A549 (cell line): ENCODE measurements at regions of chr7 and their contacts with region 1.

Region 1: DNA sequence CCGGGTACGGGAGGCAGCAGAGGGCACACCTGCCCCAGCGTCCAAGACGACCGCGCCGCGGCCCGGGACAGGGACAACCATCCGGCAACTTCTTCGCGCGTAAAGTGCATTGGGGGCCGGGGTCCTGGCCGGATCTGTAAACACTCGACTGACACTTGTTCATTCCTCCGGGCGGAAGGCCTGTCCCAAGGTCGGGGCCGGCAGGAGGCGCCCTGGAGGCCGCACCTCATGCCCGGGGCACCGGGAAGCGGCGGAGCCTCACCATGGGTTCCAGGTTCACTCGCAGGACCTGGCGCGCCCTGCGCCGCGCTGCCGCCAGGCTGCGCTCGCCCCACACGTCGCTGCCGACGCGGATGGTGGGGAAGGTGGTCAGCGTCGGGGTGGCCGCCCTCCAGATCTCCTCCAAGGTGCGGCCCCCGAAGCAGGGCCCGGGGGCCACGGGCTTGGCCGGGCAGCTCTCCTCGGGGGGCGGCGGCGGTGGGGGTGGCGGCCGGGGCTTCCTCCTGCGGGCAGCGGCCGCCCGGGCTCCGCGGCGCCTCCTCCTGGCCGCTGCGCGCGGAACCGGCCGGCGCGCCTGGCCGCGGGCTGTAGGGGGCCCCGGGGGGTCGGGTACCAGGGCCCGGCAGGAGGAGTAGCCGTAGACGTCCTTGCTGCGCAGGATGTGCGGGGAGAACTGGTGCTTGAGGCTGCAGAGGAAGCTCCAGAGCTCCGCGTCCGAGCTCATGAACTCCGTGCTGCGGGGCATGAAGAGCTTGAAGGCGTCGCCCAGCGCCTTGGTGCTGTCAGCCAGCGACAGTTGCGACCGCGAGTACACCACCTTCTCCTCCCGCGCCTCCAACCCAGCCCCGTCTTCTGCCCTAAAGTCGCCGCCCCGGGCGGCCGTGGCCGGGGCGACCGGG is 746 bp downstream of the CCDC71L start:
- DNase-seq: peak; percentile 87 to 92
- ATAC-seq: peak; percentile 86 to 87
- H3K4me3 ChIP-seq: peak overlapping the region; percentile 88
- H3K27ac ChIP-seq: peak overlapping the region; percentile 90 to 94
- H3K4me1 ChIP-seq: peaks cover 9% of the 10 kb centered on the region; the same call in 2 of the 3 replicates
- CTCF ChIP-seq: peak; percentile 99
- EP300 ChIP-seq: no peak
- POLR2A ChIP-seq: no peak; the same call in 1 of the 2 replicates
- RAD21 ChIP-seq: peak; percentile 58 to 87

Region 2: GRCh38 chr7:106583101-106583500 is 77.1 kb before region 1 on chr7:
- CTCF ChIA-PET with region 1: no interaction called
- POLR2A ChIA-PET with region 1: no interaction called
- DNase-seq: no peak
- ATAC-seq: no peak
- H3K4me3 ChIP-seq: no peak overlapping the region
- H3K27ac ChIP-seq: no peak overlapping the region
- H3K4me1 ChIP-seq: no peaks in the 10 kb centered on the region
- CTCF ChIP-seq: no peak
- EP300 ChIP-seq: no peak
- POLR2A ChIP-seq: no peak
- RAD21 ChIP-seq: no peak

Region 3: DNA sequence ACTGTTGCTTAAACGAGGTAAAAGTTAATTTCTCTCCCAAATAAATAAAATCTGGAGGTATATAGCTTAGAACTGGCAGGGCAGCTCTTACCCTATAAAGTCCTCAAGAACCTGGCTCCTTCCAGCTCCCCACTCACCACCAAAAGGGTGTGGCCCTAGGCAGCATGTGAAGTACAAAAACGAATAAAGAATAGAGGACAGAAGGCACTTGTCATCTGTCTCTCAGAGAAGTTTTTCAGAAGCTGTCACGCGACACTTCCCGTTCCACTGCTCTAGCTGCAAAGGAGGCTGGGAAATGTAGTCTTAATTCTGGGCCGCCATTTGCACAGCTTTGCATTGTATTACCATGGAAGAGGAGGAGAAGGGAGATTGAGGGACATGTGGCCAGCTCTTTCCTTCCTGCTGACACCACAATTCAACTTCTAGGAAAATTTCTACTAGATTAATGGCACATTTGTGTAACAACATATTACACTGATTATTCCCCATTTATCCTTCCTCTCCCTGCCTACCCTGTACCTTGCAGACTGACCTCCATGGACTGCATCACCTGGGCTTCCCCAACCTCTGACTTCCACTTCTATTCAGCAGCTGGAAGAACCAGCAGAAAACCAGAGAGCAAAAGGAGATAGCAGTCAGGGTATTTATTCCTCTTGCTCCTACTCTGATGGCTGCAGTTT is 61.4 kb before region 1 on chr7:
- CTCF ChIA-PET with region 1: no interaction called
- POLR2A ChIA-PET with region 1: no interaction called
- DNase-seq: peak; percentile 28 to 61
- ATAC-seq: peak; percentile 96 to 99
- H3K4me3 ChIP-seq: peak overlapping the region; percentile 15; the same call in 2 of the 3 replicates
- H3K27ac ChIP-seq: 0 out of 6 replicates have a peak overlapping the region, but pooled peaks of 1 of the 2 experiments have one; percentile 24
- H3K4me1 ChIP-seq: no peaks in the 10 kb centered on the region
- CTCF ChIP-seq: no peak
- EP300 ChIP-seq: no peak
- POLR2A ChIP-seq: no peak
- RAD21 ChIP-seq: no peak

Region 4: GRCh38 chr7:106644999-106645398 is 15.2 kb before region 1 on chr7:
- CTCF ChIA-PET with region 1: interaction called, 46 read pairs
- POLR2A ChIA-PET with region 1: no interaction called
- DNase-seq: no peak
- ATAC-seq: no peak
- H3K4me3 ChIP-seq: no peak overlapping the region
- H3K27ac ChIP-seq: no peak overlapping the region
- H3K4me1 ChIP-seq: no peaks in the 10 kb centered on the region; the same call in 2 of the 3 replicates
- CTCF ChIP-seq: no peak
- EP300 ChIP-seq: no peak
- POLR2A ChIP-seq: no peak
- RAD21 ChIP-seq: no peak

Region 5: DNA sequence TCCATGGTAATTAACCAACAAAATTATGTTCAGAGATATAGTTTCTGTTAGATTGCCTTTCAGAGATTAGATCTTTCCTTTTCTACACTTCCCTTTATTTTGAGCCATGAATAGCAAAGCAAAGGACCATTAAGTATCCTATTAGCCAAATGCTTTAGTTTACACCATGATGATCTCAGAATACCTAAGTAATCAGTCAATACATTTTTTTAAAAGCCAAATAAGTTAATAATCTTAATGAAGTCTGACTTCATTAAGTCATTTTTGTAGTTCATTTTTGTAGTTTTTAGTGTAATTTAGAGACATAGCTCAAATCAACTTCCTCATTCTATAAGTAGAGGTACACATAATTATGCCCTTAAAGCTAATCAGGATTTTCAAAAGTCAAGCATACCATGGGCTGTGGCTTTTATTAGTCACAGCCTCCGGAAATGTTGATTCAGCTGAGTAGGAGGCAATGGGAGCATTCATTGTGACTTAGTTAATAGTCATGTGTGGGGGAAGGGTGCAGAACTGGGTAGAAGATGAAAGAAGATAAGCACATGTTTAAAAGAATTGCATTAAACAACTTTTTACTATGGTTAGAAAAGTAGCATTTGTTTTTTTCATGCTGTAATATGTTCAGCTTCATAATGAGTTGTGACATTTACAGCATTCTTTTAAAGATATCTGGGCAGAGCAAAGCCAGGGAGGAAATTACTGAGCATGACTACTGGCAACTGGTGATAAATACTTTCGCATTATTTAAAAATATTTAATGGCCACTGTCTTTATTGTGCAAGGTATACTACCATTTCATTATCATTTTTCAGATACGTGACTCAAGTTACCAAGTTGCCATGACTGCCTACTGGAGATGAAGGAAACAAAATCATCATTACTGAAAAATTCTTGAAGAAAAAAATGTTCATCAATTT is 58.0 kb after region 1 on chr7:
- CTCF ChIA-PET with region 1: interaction called, 31 read pairs
- POLR2A ChIA-PET with region 1: interaction called, 4 read pairs
- DNase-seq: peak; percentile 46 to 51
- ATAC-seq: peak; percentile 70 to 88
- H3K4me3 ChIP-seq: no peak overlapping the region
- H3K27ac ChIP-seq: peak overlapping the region; percentile 5 to 65; a peak in 4 of 6 replicates
- H3K4me1 ChIP-seq: peaks cover 13% of the 10 kb centered on the region
- CTCF ChIP-seq: no peak
- EP300 ChIP-seq: 0 out of 5 replicates have a peak, but pooled peaks of 1 of the 2 experiments have one; percentile 25
- POLR2A ChIP-seq: no peak
- RAD21 ChIP-seq: no peak

Region 6: DNA sequence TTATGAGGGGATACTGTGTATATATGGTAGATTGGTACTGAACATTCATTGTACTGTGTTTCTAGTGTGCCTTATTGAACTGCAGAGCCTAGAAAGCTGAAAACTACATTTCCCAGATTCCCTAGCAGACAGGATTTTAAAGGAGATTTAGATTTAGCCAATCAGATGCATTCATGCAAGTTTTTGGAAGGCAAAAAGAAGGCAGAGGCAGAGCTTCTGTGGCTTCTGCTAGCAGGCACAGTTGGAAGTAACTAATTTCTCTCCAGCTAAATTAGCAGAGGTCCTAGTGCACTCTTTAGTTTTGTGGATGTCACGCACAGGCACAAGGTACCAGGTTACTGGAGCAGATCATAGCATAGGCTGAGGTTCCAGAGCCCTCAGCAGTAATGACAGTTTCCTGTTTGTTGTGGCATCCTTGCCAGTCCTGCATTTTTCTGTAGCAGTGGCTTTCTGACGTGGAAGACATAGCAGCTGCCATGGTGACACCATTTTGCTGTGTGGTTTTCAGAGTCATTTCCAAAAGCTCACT is 84.4 kb after region 1 on chr7:
- CTCF ChIA-PET with region 1: interaction called, 14 read pairs
- POLR2A ChIA-PET with region 1: no interaction called
- DNase-seq: no peak
- ATAC-seq: no peak
- H3K4me3 ChIP-seq: no peak overlapping the region
- H3K27ac ChIP-seq: no peak overlapping the region
- H3K4me1 ChIP-seq: no peaks in the 10 kb centered on the region
- CTCF ChIP-seq: no peak
- EP300 ChIP-seq: no peak
- POLR2A ChIP-seq: no peak
- RAD21 ChIP-seq: no peak

Region 7: GRCh38 chr7:106775552-106775936 is 115.3 kb after region 1 on chr7:
- CTCF ChIA-PET with region 1: interaction called, 12 read pairs
- POLR2A ChIA-PET with region 1: interaction called, 4 read pairs
- DNase-seq: peak; percentile 47 to 75
- ATAC-seq: peak; percentile 80
- H3K4me3 ChIP-seq: peak overlapping the region; percentile 35
- H3K27ac ChIP-seq: peak overlapping the region; percentile 82 to 92
- H3K4me1 ChIP-seq: peaks cover 53% of the 10 kb centered on the region
- CTCF ChIP-seq: no peak
- EP300 ChIP-seq: no peak; a peak in 1 of 5 replicates
- POLR2A ChIP-seq: no peak
- RAD21 ChIP-seq: no peak